ENCODE measurements at regions of chr4 and their contacts with region 1.

Region 1: DNA sequence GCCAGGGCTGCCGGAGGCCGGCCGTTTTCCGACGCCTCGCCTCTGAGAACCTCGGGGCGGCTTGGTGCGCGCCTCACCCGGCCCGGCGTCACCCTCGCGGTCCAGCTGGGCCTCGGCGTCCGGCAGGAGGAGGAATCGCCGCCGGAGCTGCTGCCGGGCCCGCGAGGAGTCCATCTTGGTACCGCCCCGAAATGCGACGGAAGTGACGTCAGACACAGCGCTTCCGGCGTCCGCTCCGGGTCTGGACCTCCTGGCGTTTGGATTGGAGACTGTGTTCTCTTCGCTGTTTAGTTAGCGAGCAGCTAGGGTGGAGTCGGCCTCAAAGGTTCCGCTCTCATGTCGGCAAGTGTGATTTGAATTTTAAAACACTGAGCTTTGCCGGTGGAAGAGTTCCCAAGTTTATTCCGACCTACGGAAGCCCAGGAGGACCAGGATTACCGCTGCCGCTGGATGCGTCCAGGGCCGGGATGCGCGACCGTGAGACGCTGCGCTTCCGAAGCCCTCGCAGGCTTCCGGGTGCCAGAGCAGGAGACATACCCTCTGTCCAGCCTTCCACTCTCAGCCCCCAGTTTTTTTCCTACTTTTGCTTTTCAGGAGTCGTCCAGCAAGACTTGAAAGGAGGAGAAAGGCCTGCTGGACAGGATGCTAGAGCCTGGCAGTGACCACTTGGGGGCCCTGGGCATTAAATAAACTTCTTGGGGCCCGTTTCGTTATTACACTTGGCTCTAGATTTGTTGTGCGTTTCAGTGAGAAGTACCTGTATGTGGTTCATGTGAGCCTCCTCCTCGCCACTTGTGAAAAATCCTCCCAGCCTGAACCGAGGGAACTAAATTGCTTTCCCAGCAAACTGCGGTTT is at the start of gene TMEM128:
- DNase-seq: peak; percentile 90 to 94 (median 91)
- H3K4me3 ChIP-seq: peak within 1 kb of the TSS; percentile 95 to 97
- H3K4me3 Mint-ChIP-seq: peak within 1 kb of the TSS; percentile 91 to 98 (median 96)
- H3K27ac ChIP-seq: peak within 1 kb of the TSS; percentile 80
- H3K27ac Mint-ChIP-seq: peak within 1 kb of the TSS; percentile 98 to 99 (median 99)
- H3K4me1 ChIP-seq: peaks cover 18% of the 10 kb centered on the region
- H3K4me1 Mint-ChIP-seq: peaks cover 26 to 45% (median 31%) of the 10 kb centered on the region in 4 donors
- H3K27me3 ChIP-seq: no peaks in the 10 kb centered on the region
- H3K27me3 Mint-ChIP-seq: no peaks in the 10 kb centered on the region
- total RNA-seq, gene TMEM128: 20.0 to 20.7 TPM

Region 2: DNA sequence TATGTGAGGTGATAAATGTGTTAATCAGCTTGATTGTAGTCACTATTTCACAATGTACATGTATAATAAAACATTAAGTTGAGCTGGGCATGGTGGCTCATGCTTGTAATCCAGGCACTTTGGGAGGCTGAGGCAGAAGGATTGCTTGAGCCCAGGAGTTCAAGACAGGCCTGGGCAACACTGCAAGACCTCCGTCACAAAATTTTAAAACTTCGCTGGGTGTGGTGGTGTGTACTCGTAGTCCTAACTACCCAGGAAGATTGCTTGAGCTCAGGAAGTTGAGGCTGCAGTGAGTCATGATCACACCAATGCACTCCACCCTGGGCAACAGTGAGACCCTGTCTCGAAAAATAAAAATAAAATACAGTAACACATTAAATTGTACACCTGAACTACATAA is 21.6 kb after region 1 on chr4:
- CTCF ChIA-PET with region 1: interaction called, 15 read pairs
- POLR2A ChIA-PET with region 1: interaction called, 33 read pairs
- intact Hi-C with region 1: no loop called
- DNase-seq: peak; percentile 53 to 81 (median 73)
- H3K4me3 ChIP-seq: no peak overlapping the region
- H3K4me3 Mint-ChIP-seq: peak overlapping the region; percentile 59 to 88 (median 70)
- H3K27ac ChIP-seq: peak overlapping the region; percentile 76
- H3K27ac Mint-ChIP-seq: peak overlapping the region; percentile 94 to 98 (median 97)
- H3K4me1 ChIP-seq: peaks cover 50% of the 10 kb centered on the region
- H3K4me1 Mint-ChIP-seq: peaks cover 26 to 49% (median 32%) of the 10 kb centered on the region in 4 donors
- H3K27me3 ChIP-seq: no peaks in the 10 kb centered on the region
- H3K27me3 Mint-ChIP-seq: no peaks in the 10 kb centered on the region

Region 3: DNA sequence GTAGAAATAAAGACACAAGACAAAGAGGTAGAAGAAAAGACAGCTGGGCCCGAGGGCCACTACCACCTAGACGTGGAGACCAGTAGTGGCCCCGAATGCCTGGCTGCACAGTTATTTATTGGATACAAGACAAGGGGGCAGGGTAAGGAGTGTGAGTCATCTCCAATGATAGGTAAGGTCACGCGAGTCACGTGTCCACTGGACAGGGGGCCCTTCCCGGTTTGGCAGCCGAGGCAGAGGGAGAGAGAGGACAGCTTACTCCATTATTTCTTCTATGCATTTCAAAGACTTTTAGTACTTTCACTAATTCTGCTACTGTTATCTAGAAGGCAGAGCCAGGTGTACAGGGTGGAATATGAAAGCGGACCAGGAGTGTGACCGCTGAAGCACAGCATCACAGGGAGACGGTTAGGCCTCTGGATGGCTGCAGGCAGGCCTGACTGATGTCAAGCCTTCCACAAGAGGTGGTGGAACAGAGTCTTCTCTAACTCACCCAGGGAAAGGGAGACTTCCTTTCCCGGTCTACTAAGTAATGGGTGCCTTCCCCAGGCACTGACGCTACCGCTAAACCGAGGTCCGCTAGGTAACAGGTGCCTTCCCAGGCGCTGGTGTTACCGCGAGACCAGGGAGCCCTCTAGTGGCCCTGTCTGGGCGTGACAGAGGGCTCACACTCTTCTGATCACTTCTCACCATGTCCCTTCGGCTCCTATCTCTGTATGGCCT is 86.7 kb after region 1 on chr4:
- CTCF ChIA-PET with region 1: interaction called, 70 read pairs
- POLR2A ChIA-PET with region 1: interaction called, 9 read pairs
- intact Hi-C with region 1: loop called (anchors 1 kb)
- DNase-seq: peak; percentile 73 to 77 (median 76)
- H3K4me3 ChIP-seq: no peak overlapping the region
- H3K4me3 Mint-ChIP-seq: peak overlapping the region in 5 of 8 donors; percentile 30 to 58 (median 41)
- H3K27ac ChIP-seq: no peak overlapping the region
- H3K27ac Mint-ChIP-seq: peak overlapping the region in 6 of 7 donors; percentile 3 to 42 (median 37)
- H3K4me1 ChIP-seq: peaks cover 4% of the 10 kb centered on the region
- H3K4me1 Mint-ChIP-seq: peaks cover 4 to 10% (median 7%) of the 10 kb centered on the region in 4 donors
- H3K27me3 ChIP-seq: no peaks in the 10 kb centered on the region
- H3K27me3 Mint-ChIP-seq: no peaks in the 10 kb centered on the region

Region 4: GRCh38 chr4:4430492-4431197 is 182.4 kb after region 1 on chr4:
- CTCF ChIA-PET with region 1: interaction called, 35 read pairs
- POLR2A ChIA-PET with region 1: no interaction called
- intact Hi-C with region 1: loop called (anchors 1 kb)
- DNase-seq: peak; percentile 44 to 57 (median 50)
- H3K4me3 ChIP-seq: no peak overlapping the region
- H3K4me3 Mint-ChIP-seq: no peak overlapping the region
- H3K27ac ChIP-seq: no peak overlapping the region
- H3K27ac Mint-ChIP-seq: peak overlapping the region in 4 of 7 donors; percentile 16 to 51 (median 26)
- H3K4me1 ChIP-seq: no peaks in the 10 kb centered on the region
- H3K4me1 Mint-ChIP-seq: peaks cover 7 to 14% (median 8%) of the 10 kb centered on the region in 4 donors
- H3K27me3 ChIP-seq: no peaks in the 10 kb centered on the region
- H3K27me3 Mint-ChIP-seq: no peaks in the 10 kb centered on the region

Region 5: GRCh38 chr4:4488405-4489404 is 240.4 kb after region 1 on chr4:
- CTCF ChIA-PET with region 1: no interaction called
- POLR2A ChIA-PET with region 1: no interaction called
- intact Hi-C with region 1: no loop called
- DNase-seq: peak; percentile 59 to 68 (median 67)
- H3K4me3 ChIP-seq: no peak overlapping the region
- H3K4me3 Mint-ChIP-seq: no peak overlapping the region
- H3K27ac ChIP-seq: no peak overlapping the region
- H3K27ac Mint-ChIP-seq: no peak overlapping the region
- H3K4me1 ChIP-seq: peaks cover 5% of the 10 kb centered on the region
- H3K4me1 Mint-ChIP-seq: peaks cover 5 to 15% (median 9%) of the 10 kb centered on the region in 4 donors
- H3K27me3 ChIP-seq: no peaks in the 10 kb centered on the region
- H3K27me3 Mint-ChIP-seq: no peaks in the 10 kb centered on the region

Region 6: DNA sequence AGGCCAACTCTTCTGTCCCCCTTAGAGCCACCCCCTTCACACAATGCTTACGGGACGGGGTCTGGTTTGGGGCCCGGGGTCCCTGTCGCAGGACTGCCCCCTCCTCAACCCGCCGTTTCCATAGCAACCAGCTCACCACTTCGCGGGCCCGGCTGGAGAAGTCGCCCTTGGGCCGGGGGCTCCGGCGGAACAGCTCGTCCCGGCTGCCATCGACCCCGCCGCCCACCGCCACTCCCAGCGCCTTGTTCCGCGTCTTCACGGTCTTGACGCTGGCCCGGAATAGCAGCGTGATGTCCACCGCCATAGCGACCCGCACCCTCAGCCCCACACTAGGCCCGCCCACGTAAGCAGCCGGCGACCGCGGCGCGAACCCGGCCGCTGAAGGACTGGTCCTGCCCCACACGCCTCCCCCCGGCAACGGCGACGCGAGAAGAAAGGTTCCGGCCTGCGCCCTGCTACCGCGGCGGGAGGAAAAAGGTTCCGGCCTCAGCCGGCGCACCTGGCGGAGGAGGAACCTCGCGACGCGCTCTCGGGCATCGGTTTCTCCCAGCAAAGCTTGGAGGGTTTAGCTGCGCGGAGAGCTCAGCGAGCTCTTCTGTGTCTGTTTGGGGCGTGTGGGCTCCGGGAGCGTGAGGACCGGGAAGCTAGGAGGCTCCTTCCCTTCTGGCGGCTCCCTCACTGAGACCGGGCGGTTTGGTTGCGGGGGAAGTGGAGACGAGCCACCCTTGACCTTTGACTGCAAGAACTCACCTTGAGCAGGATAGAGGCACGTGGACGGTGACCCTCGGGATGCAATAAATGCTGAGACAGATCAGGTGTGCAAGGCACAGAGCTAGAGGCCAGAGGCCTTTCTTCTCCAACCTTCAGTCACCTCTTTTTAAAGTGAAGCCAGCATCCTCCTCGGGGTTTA is 293.7 kb after region 1 on chr4 and contains the start of gene STX18:
- CTCF ChIA-PET with region 1: interaction called, 4 read pairs
- POLR2A ChIA-PET with region 1: interaction called, 12 read pairs
- intact Hi-C with region 1: no loop called
- DNase-seq: peak; percentile 83 to 88 (median 85)
- H3K4me3 ChIP-seq: peak within 1 kb of the TSS; percentile 77 to 88
- H3K4me3 Mint-ChIP-seq: peak within 1 kb of the TSS; percentile 92 to 99 (median 96)
- H3K27ac ChIP-seq: peak within 1 kb of the TSS; percentile 63
- H3K27ac Mint-ChIP-seq: peak within 1 kb of the TSS; percentile 92 to 97 (median 95)
- H3K4me1 ChIP-seq: peaks cover 35% of the 10 kb centered on the region
- H3K4me1 Mint-ChIP-seq: peaks cover 28 to 72% (median 50%) of the 10 kb centered on the region in 4 donors
- H3K27me3 ChIP-seq: no peaks in the 10 kb centered on the region
- H3K27me3 Mint-ChIP-seq: no peaks in the 10 kb centered on the region
- total RNA-seq, gene STX18: 33.2 to 34.5 TPM

Region 7: DNA sequence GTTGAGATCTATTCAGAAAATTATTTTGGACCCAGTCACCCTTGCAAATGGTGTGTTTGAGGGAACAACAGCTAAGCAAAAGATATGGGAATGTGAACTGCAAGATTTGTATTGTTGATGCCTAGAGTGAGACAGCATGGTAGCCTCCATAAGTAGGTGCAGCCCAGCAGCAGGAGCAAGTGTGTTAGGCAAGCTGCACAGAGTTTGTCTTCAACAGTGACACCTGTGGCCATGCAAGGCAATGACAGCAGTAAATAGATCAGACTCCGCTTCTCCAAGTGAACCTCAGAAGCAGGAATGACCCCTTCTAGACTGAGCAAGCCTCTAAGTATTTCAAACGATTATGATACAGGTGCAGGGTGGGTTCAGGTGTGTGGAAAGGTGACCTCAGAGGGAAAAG is 477.8 kb after region 1 on chr4:
- CTCF ChIA-PET with region 1: no interaction called
- POLR2A ChIA-PET with region 1: no interaction called
- intact Hi-C with region 1: no loop called
- DNase-seq: no peak
- H3K4me3 ChIP-seq: no peak overlapping the region
- H3K4me3 Mint-ChIP-seq: no peak overlapping the region
- H3K27ac ChIP-seq: no peak overlapping the region
- H3K27ac Mint-ChIP-seq: no peak overlapping the region
- H3K4me1 ChIP-seq: no peaks in the 10 kb centered on the region
- H3K4me1 Mint-ChIP-seq: no peaks in the 10 kb centered on the region
- H3K27me3 ChIP-seq: no peaks in the 10 kb centered on the region
- H3K27me3 Mint-ChIP-seq: no peaks in the 10 kb centered on the region

Region 8: DNA sequence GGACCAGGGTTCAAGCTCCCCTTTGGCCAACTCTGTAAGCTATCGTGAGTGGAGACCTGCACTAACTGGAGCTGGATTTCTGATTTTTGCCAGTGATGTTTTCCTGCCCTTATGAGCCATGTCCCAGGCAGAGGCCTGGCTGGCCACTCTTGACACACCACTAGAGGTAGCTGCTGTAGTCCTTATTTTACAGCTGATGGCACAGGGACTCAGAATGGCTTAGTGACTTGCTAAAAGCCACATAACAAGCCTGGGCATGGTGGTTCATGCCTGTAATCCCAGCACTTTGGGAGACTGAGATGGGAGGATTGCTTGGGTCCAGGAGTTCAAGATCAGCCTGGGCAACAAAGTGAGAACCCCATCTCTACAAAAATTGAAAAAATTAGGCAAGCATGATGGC is 737.6 kb after region 1 on chr4:
- CTCF ChIA-PET with region 1: no interaction called
- POLR2A ChIA-PET with region 1: no interaction called
- intact Hi-C with region 1: no loop called
- DNase-seq: no peak
- H3K4me3 ChIP-seq: no peak overlapping the region
- H3K4me3 Mint-ChIP-seq: no peak overlapping the region
- H3K27ac ChIP-seq: no peak overlapping the region
- H3K27ac Mint-ChIP-seq: no peak overlapping the region
- H3K4me1 ChIP-seq: no peaks in the 10 kb centered on the region
- H3K4me1 Mint-ChIP-seq: no peaks in the 10 kb centered on the region
- H3K27me3 ChIP-seq: no peaks in the 10 kb centered on the region
- H3K27me3 Mint-ChIP-seq: no peaks in the 10 kb centered on the region